B cell (primary cell): ENCODE measurements at regions of chr18 and their contacts with region 1.

Region 1: GRCh38 chr18:44758861-44759631 is 78.4 kb downstream of the SETBP1 start:
- DNase-seq: peak; percentile 90
- ATAC-seq: peak; percentile 84
- H3K4me3 ChIP-seq: peak overlapping the region in 4 of 5 experiments; percentile 9 to 42 (median 28)
- H3K4me3 Mint-ChIP-seq: peak overlapping the region; percentile 77
- H3K27ac ChIP-seq: peak overlapping the region; percentile 87 to 94
- H3K27ac Mint-ChIP-seq: peak overlapping the region; percentile 94
- H3K4me1 ChIP-seq: peaks cover 79 to 84% of the 10 kb centered on the region in 2 donors
- H3K4me1 Mint-ChIP-seq: peaks cover 96% of the 10 kb centered on the region
- H3K27me3 ChIP-seq: no peaks in the 10 kb centered on the region
- H3K27me3 Mint-ChIP-seq: no peaks in the 10 kb centered on the region
- CTCF ChIP-seq: no peak

Region 2: DNA sequence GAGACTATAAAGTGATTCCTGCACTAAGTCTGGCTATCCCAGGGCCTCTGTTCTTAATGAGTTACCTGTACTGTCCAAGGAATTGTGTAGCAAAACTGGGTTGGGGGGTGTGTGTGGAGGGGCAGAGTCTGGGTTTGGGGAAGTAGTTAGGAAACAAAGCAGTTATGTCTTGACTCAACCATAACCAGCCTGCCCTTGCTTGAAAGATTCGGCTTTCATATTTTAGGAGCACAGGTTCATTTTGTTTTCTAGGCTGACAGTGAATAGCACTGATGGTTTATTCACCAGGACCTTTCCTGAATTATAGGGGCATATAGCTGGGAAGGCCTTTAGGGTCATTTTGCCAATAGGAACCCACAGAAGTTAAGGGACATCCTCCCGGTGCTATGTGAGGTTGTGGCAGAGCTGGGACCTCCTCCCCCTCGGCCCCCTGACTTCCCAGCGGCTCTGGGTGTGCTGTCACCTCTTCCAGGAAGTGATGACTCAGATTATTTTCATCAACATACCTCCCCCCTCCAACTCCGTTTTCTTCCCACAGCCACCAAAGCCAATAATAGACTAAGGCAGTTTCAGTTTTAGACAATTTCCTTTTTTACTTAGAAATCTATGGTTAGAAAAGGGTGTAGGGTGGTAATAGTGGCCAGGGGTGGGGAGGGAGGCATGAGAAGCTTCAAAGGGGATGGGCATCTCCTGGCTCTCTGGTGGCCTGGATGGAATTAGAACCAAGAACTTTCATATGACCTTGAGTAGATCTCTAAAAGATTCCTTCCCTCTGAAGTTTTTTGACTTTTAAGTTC is 33.5 kb before region 1 on chr18:
- CTCF ChIA-PET with region 1: interaction called, 24 read pairs
- POLR2A ChIA-PET with region 1: interaction called, 12 read pairs
- intact Hi-C with region 1: loop called (anchors 1 kb)
- DNase-seq: peak; percentile 68
- ATAC-seq: peak; percentile 50
- H3K4me3 ChIP-seq: peak overlapping the region in 3 of 5 experiments; percentile 3 to 23 (median 7)
- H3K4me3 Mint-ChIP-seq: peak overlapping the region; percentile 70
- H3K27ac ChIP-seq: peak overlapping the region; percentile 80 to 85
- H3K27ac Mint-ChIP-seq: peak overlapping the region; percentile 88
- H3K4me1 ChIP-seq: peaks cover 99 to 100% of the 10 kb centered on the region in 2 donors
- H3K4me1 Mint-ChIP-seq: peaks cover 98% of the 10 kb centered on the region
- H3K27me3 ChIP-seq: no peaks in the 10 kb centered on the region
- H3K27me3 Mint-ChIP-seq: no peaks in the 10 kb centered on the region
- CTCF ChIP-seq: no peak

Region 3: GRCh38 chr18:44742704-44743311 is 16.2 kb before region 1 on chr18:
- CTCF ChIA-PET with region 1: interaction called, 6 read pairs
- POLR2A ChIA-PET with region 1: interaction called, 6 read pairs
- intact Hi-C with region 1: loop called (anchors 2 kb)
- DNase-seq: no peak
- ATAC-seq: no peak
- H3K4me3 ChIP-seq: no peak overlapping the region
- H3K4me3 Mint-ChIP-seq: peak overlapping the region; percentile 2
- H3K27ac ChIP-seq: peak overlapping the region in 1 of 2 donors; percentile 59
- H3K27ac Mint-ChIP-seq: peak overlapping the region; percentile 68
- H3K4me1 ChIP-seq: peaks cover 34 to 43% of the 10 kb centered on the region in 2 donors
- H3K4me1 Mint-ChIP-seq: peaks cover 76% of the 10 kb centered on the region
- H3K27me3 ChIP-seq: no peaks in the 10 kb centered on the region
- H3K27me3 Mint-ChIP-seq: no peaks in the 10 kb centered on the region
- CTCF ChIP-seq: no peak

Region 4: DNA sequence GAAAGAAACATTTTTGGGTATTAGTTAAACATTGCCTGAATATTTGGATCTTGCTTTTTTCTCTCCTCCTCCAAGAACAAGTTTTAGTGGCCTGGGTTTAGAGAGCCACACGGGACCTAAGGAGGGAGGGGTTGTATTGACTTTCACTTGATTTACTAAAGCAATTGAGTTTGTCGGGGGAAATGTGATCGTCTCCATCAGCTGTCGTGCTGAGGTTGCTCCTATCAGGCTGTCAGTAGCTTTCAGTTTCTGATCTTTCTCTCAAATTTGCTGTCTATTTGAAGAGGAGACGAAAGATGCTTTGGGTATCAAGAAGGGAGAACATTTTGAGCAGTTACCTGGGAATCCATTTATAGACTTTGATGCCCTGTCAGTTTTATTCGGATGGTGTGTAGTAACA is 27.6 kb after region 1 on chr18:
- CTCF ChIA-PET with region 1: interaction called, 5 read pairs
- POLR2A ChIA-PET with region 1: interaction called, 9 read pairs
- intact Hi-C with region 1: loop called (anchors 2 kb)
- DNase-seq: peak; percentile 64
- ATAC-seq: peak; percentile 77
- H3K4me3 ChIP-seq: peak overlapping the region in 4 of 5 experiments; percentile 6 to 59 (median 45)
- H3K4me3 Mint-ChIP-seq: peak overlapping the region; percentile 92
- H3K27ac ChIP-seq: peak overlapping the region; percentile 50 to 79
- H3K27ac Mint-ChIP-seq: peak overlapping the region; percentile 93
- H3K4me1 ChIP-seq: peaks cover 48 to 50% of the 10 kb centered on the region in 2 donors
- H3K4me1 Mint-ChIP-seq: peaks cover 71% of the 10 kb centered on the region
- H3K27me3 ChIP-seq: no peaks in the 10 kb centered on the region
- H3K27me3 Mint-ChIP-seq: no peaks in the 10 kb centered on the region
- CTCF ChIP-seq: no peak

Region 5: GRCh38 chr18:44799907-44800421 is 40.9 kb after region 1 on chr18:
- CTCF ChIA-PET with region 1: interaction called, 4 read pairs
- POLR2A ChIA-PET with region 1: interaction called, 3 read pairs
- intact Hi-C with region 1: loop called (anchors 2 kb)
- DNase-seq: peak; percentile 61
- ATAC-seq: peak; percentile 40
- H3K4me3 ChIP-seq: peak overlapping the region in 1 of 5 experiments; percentile 1
- H3K4me3 Mint-ChIP-seq: peak overlapping the region; percentile 65
- H3K27ac ChIP-seq: peak overlapping the region; percentile 72 to 83
- H3K27ac Mint-ChIP-seq: peak overlapping the region; percentile 91
- H3K4me1 ChIP-seq: peaks cover 44% of the 10 kb centered on the region in 2 donors
- H3K4me1 Mint-ChIP-seq: peaks cover 85% of the 10 kb centered on the region
- H3K27me3 ChIP-seq: no peaks in the 10 kb centered on the region
- H3K27me3 Mint-ChIP-seq: no peaks in the 10 kb centered on the region
- CTCF ChIP-seq: no peak

Region 6: DNA sequence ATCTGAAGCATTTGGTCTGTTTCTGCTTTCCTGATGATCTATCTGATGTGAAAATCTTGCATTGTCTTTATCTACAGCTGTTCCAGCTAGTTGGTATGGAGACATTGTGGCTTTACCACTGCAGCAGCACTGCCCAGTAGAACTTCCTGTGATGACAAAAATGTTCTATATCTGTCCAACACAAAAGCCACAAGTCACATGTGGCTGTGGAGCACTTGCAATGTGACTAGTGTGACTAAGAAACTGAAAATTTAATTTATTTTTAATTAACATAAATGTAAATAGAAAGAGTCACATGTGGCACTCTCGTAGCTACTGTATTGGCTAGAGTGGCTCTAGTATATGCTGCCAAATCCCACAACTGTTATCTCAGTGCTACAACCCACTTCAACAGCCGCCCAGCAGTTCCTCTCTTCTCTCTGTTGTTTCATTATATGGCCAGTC is 347.3 kb after region 1 on chr18:
- CTCF ChIA-PET with region 1: interaction called, 3 read pairs
- POLR2A ChIA-PET with region 1: interaction called, 3 read pairs
- intact Hi-C with region 1: loop called (anchors 1 kb)
- DNase-seq: peak; percentile 80
- ATAC-seq: peak; percentile 56
- H3K4me3 ChIP-seq: peak overlapping the region in 2 of 5 experiments; percentile 8 to 30
- H3K4me3 Mint-ChIP-seq: peak overlapping the region; percentile 59
- H3K27ac ChIP-seq: peak overlapping the region; percentile 89 to 93
- H3K27ac Mint-ChIP-seq: peak overlapping the region; percentile 83
- H3K4me1 ChIP-seq: peaks cover 67 to 68% of the 10 kb centered on the region in 2 donors
- H3K4me1 Mint-ChIP-seq: peaks cover 53% of the 10 kb centered on the region
- H3K27me3 ChIP-seq: no peaks in the 10 kb centered on the region
- H3K27me3 Mint-ChIP-seq: no peaks in the 10 kb centered on the region
- CTCF ChIP-seq: no peak